RWPE1 (cell line): ENCODE measurements at regions of chr20 and their contacts with region 1.

Region 1: DNA sequence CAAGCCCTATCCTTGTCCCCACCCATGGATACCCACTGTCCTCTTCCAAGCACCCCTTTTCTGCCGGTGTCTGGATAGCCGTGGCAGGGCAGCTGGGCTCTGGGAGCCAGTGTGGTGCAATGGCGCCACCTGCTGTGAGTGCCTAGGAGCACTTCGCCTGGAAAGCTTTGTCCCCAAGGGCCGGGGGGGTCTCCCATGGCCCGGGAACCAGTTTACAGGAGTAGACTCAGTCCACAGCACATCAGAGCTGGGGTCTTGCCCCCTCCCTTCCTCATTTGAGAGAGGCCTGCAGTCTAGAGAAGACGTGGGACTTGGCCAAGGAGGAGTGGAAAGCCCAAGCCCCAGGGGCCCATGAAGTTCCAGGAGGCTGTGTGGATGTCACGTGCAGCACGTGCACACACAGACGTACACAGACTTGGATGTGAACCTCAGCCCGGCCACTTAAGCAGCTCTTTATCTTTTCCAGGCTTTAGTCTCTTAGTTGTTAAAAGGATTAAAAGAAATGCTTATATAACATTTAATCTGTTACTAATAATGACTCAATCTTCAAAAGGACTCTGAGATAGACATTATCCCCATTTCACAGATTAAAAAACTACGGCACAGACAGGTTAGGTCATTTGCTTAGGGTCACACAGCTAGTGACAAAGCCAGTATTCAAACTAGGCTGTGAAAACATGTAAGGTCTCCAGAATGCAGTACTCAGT is 40.9 kb upstream of the CDH22 start:
- DNase-seq: peak; percentile 83
- H3K27ac ChIP-seq: no peak overlapping the region; the same call in 1 of the 2 replicates
- CTCF ChIP-seq: peak; percentile 98

Region 2: DNA sequence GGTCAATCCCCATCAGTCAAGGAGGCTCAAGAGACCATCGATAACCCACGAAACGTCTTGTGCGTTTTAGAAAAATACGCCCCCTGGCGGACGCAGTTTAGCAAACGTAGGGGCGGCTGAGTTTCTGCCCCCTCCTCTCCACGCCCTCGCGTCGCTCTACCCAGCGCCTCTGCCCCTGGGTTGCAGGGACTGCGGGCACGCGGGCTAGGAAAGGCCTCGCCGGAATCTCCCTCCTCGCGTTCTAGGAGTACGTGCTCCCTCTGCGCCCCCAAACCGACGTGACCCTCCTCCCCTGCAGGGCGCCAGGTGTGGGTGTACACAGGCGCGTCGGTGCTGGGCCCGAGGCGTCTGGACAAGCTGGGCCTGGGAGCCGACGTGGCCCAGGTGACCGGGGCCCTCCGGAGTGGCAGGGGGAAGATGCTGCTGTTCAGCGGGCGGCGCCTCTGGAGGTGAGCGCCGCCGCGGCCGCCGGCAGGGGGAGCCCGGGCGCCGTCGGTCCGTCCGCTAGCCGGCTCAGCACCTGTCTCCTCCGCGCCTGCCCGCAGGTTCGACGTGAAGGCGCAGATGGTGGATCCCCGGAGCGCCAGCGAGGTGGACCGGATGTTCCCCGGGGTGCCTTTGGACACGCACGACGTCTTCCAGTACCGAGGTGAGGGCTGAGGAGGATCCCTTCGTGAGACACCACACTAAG is 335.2 kb before region 1 on chr20:
- CTCF ChIA-PET with region 1: interaction called, 11 read pairs
- POLR2A ChIA-PET with region 1: interaction called, 4 read pairs
- DNase-seq: peak; percentile 83
- H3K27ac ChIP-seq: no peak overlapping the region
- CTCF ChIP-seq: peak; percentile 100

Region 3: GRCh38 chr20:46132705-46133120 is 216.5 kb before region 1 on chr20:
- CTCF ChIA-PET with region 1: interaction called, 47 read pairs
- POLR2A ChIA-PET with region 1: no interaction called
- DNase-seq: peak; percentile 89
- H3K27ac ChIP-seq: peak overlapping the region; percentile 23; the same call in 1 of the 2 replicates
- CTCF ChIP-seq: peak; percentile 99

Region 4: GRCh38 chr20:46293084-46293483 is 56.1 kb before region 1 on chr20:
- CTCF ChIA-PET with region 1: interaction called, 8 read pairs
- POLR2A ChIA-PET with region 1: interaction called, 18 read pairs
- DNase-seq: peak; percentile 59
- H3K27ac ChIP-seq: no peak overlapping the region
- CTCF ChIP-seq: no peak

Region 5: DNA sequence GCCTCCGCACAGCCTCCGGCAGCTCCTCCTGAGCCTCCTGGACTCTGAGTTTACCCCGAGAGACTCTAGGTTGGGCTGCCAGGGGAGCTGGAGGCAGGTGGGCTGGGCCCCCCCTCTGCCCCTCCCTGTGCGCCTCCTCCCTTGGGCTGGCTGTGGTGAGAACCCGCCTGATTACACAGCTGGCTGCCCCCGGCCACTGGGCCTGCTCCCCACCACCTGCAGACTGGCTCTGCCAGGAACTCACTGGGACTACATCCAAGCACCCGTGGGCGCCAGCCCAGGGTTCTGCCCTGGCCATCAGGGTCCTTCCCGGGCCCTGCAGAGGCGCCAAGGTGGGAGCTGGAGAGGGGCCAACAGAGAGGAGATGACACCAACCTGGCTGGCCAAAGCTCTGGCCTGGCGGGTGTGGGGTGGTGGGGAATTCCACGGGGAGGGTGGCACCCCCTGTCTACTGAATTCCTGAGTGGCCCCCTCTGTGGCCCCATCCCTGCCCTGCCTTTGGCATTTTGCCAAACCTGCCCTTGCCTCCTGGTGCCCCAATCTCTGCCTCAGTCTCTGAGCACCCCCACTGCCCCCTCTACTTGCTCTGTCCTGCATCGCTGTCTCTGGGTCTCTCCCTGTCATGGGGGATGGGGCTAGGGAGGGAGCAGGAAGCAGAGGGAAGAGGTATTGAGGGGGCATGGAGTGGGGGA is 19.0 kb before region 1 on chr20:
- CTCF ChIA-PET with region 1: interaction called, 82 read pairs
- POLR2A ChIA-PET with region 1: interaction called, 12 read pairs
- DNase-seq: no peak
- H3K27ac ChIP-seq: peak overlapping the region; percentile 86
- CTCF ChIP-seq: no peak